ENCODE measurements at regions of chr1 and their contacts with region 1.

Region 1: DNA sequence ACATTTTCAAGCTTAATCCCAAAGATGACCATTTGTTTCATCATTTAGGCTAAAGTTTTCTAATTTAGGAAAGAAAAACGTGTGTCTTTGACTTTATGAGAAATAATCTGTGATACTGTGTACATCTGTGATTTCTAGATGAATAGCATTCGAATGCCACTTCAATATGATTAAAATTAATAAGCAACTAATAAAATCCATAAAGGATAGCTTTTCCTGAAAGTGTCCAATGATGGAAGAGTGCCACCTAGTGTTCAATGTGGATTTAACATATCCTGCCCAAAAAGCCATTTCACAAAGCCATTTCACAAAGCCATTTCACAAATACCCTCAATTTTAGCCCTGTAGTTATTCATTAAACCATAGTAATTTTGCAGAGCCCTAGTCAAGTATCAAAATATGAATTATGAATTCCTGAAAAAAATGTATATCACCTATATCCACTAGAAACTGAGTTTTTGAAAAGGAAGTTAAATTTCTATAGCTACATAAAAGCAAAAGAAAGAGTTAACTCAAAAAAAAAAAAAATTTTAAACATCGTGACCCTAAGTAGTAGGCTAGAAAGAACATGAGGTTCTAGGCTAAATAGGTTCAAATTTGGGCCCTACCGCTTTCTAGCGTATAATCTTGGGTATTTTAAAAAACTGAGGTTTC is 19.1 kb downstream of the NME7 start:
- DNase-seq: no peak
- ATAC-seq: no peak

Region 2: GRCh38 chr1:168342572-168343280 is 1005.8 kb before region 1 on chr1:
- intact Hi-C with region 1: loop called in 1 of 2 experiments (anchors 5 kb)
- DNase-seq: peak; percentile 87
- ATAC-seq: peak; percentile 99

Region 3: DNA sequence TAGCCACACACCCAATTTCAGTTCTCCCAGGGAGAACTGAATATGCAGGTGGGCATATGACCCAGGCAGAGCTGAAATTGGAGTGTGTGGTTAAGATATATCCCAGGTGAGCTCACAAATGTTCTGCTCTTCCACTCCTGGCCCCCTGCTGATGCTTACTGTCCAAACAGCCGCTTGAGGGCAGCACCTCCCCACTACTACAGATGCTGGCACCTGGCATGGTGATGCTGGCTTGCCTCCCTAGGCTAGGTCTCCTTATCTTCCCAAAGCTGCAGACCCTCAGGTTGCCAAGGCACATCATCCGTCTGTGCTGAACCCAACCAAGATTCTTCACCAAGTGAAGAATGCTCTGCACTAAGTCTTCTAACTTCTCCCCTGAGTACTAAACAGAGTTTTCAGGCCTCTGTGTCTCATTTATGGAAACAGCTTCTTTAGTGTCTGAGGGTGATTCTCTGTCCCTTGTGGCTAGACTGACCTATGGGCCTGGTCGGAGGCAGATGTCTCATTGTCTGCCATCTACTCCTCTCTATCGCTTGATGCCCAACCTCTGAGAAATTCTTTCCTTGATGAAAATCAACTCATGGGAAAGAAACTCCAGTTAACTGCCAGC is 744.9 kb before region 1 on chr1:
- intact Hi-C with region 1: loop called (anchors 2 to 5 kb)
- DNase-seq: peak; percentile 81
- ATAC-seq: peak; percentile 93 to 94

Region 4: GRCh38 chr1:168734946-168735345 is 613.6 kb before region 1 on chr1:
- intact Hi-C with region 1: loop called in 1 of 2 experiments (anchors 10 kb)
- DNase-seq: no peak
- ATAC-seq: peak; percentile 43 to 44

Region 5: GRCh38 chr1:169081503-169082123 is 266.9 kb before region 1 on chr1:
- intact Hi-C with region 1: no loop called
- DNase-seq: no peak
- ATAC-seq: peak; percentile 38 to 66

Measured in left cardiac atrium (tissue), 4 donors.